Caco-2 (cell line): ENCODE measurements at regions of chr6 and their contacts with region 1.

Region 1: GRCh38 chr6:144659202-144660182 is 374.4 kb downstream of the UTRN start:
- DNase-seq: peak; percentile 21 to 39
- H3K4me3 ChIP-seq: no peak overlapping the region
- H3K4me3 Mint-ChIP-seq: no peak overlapping the region
- H3K27ac Mint-ChIP-seq: peak overlapping the region; percentile 79
- H3K4me1 ChIP-seq: peaks cover 65% of the 10 kb centered on the region
- H3K4me1 Mint-ChIP-seq: peaks cover 41% of the 10 kb centered on the region
- H3K27me3 ChIP-seq: no peaks in the 10 kb centered on the region
- H3K27me3 Mint-ChIP-seq: no peaks in the 10 kb centered on the region
- CTCF ChIP-seq: no peak

Region 2: GRCh38 chr6:144619984-144620383 is 39.5 kb before region 1 on chr6:
- CTCF ChIA-PET with region 1: no interaction called
- POLR2A ChIA-PET with region 1: no interaction called
- intact Hi-C with region 1: loop called (anchors 2 kb)
- DNase-seq: no peak
- H3K4me3 ChIP-seq: no peak overlapping the region
- H3K4me3 Mint-ChIP-seq: no peak overlapping the region
- H3K27ac Mint-ChIP-seq: no peak overlapping the region
- H3K4me1 ChIP-seq: peaks cover 17% of the 10 kb centered on the region
- H3K4me1 Mint-ChIP-seq: peaks cover 33% of the 10 kb centered on the region
- H3K27me3 ChIP-seq: no peaks in the 10 kb centered on the region
- H3K27me3 Mint-ChIP-seq: no peaks in the 10 kb centered on the region
- CTCF ChIP-seq: no peak

Region 3: DNA sequence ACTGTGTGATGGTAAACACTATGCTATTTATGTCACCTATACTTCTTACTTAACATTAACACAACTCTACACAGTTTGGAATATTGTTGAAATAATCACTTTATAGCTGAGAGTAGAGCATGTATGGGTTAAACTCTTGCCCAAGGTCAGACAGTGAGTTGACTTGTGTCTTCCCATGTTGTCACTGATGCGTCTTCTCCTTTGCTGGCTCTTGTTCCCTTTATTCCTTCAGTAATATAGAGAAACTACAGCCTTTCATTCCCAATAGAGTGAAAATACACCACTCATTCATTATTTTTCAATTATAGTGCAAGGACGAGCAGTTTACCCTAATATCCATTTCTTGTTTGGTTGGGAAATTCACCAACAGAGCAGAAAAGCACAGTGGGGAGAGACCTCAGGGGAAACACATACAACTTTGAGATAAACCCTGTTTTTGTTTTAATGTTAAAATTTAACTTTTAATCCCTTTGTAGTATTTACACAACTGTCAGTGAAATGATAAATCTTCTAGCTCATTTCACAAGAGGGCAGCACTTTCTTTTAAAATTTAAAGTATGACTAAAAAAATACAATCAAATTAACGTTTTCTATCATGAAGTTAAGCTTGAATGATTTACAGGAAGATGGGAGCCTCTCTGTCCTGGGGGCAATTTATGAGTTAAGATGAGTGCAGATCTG is 11.4 kb before region 1 on chr6:
- CTCF ChIA-PET with region 1: interaction called, 3 read pairs
- POLR2A ChIA-PET with region 1: no interaction called
- intact Hi-C with region 1: loop called (anchors 1 kb)
- DNase-seq: peak in 1 of 2 experiments; percentile 10
- H3K4me3 ChIP-seq: no peak overlapping the region
- H3K4me3 Mint-ChIP-seq: peak overlapping the region; percentile 15
- H3K27ac Mint-ChIP-seq: no peak overlapping the region
- H3K4me1 ChIP-seq: peaks cover 47% of the 10 kb centered on the region
- H3K4me1 Mint-ChIP-seq: peaks cover 32% of the 10 kb centered on the region
- H3K27me3 ChIP-seq: no peaks in the 10 kb centered on the region
- H3K27me3 Mint-ChIP-seq: no peaks in the 10 kb centered on the region
- CTCF ChIP-seq: no peak

Region 4: DNA sequence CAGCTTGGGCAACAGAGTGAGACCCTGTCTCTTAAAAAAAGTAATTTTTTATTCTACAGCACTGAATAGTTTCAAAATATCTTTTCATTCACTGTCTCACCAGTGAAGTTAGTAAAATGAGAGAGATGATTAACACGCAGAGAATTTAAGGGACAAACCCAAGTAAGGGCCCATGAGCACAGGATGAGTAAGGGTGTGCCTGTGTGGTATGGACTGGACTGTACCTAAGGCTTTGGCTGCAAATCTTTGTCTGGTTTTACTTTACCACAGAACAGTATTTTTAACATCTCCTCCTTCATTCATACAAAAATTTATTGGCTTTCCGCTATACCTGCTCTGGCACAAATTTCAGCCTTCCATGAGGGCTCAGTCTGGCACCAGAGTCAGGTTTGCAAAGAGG is 58.9 kb after region 1 on chr6:
- CTCF ChIA-PET with region 1: no interaction called
- POLR2A ChIA-PET with region 1: no interaction called
- intact Hi-C with region 1: no loop called
- DNase-seq: no peak
- H3K4me3 ChIP-seq: no peak overlapping the region
- H3K4me3 Mint-ChIP-seq: no peak overlapping the region
- H3K27ac Mint-ChIP-seq: no peak overlapping the region
- H3K4me1 ChIP-seq: no peaks in the 10 kb centered on the region
- H3K4me1 Mint-ChIP-seq: no peaks in the 10 kb centered on the region
- H3K27me3 ChIP-seq: no peaks in the 10 kb centered on the region
- H3K27me3 Mint-ChIP-seq: no peaks in the 10 kb centered on the region
- CTCF ChIP-seq: no peak

Region 5: DNA sequence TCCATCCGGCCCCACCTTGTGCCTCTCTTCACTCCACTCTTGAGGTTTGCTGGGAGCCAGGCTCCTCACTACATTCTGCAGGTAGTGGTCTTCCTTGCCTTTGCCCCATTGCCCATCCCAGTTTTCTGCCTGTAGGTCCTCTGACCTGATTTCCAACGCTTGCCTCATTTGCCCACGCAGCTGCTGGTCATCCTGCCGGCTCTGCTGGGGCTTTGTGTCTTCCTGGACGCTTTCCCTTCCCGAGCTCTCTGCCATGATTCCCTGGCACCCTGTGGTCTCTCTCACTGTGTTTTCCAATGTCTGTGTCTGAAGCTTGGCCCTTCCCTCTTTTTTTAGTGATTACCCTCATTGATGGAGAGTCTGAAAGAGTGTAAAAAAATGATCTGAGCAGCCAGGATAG is 77.3 kb after region 1 on chr6:
- CTCF ChIA-PET with region 1: no interaction called
- POLR2A ChIA-PET with region 1: no interaction called
- intact Hi-C with region 1: no loop called
- DNase-seq: no peak
- H3K4me3 ChIP-seq: no peak overlapping the region
- H3K4me3 Mint-ChIP-seq: no peak overlapping the region
- H3K27ac Mint-ChIP-seq: no peak overlapping the region
- H3K4me1 ChIP-seq: no peaks in the 10 kb centered on the region
- H3K4me1 Mint-ChIP-seq: no peaks in the 10 kb centered on the region
- H3K27me3 ChIP-seq: no peaks in the 10 kb centered on the region
- H3K27me3 Mint-ChIP-seq: no peaks in the 10 kb centered on the region
- CTCF ChIP-seq: no peak